GM12878 (cell line): ENCODE measurements at regions of chr1 and their contacts with region 1.

Region 1: GRCh38 chr1:205485338-205486228 is 18.9 kb upstream of the CDK18 start:
- DNase-seq: no peak
- ATAC-seq: peak; percentile 65
- H3K4me3 ChIP-seq: no peak overlapping the region
- H3K27ac ChIP-seq: no peak overlapping the region
- H3K4me1 ChIP-seq: peaks cover 14% of the 10 kb centered on the region
- H3K27me3 ChIP-seq: 0 out of 4 replicates have a peak, but pooled peaks cover 0 to 1% of the 10 kb centered on the region in 2 experiments
- CTCF ChIP-seq: peak; percentile 94 to 97 (median 96); a peak in 5 of 6 replicates
- EP300 ChIP-seq: no peak
- POLR2A ChIP-seq: no peak
- RAD21 ChIP-seq: peak; percentile 98

Region 2: DNA sequence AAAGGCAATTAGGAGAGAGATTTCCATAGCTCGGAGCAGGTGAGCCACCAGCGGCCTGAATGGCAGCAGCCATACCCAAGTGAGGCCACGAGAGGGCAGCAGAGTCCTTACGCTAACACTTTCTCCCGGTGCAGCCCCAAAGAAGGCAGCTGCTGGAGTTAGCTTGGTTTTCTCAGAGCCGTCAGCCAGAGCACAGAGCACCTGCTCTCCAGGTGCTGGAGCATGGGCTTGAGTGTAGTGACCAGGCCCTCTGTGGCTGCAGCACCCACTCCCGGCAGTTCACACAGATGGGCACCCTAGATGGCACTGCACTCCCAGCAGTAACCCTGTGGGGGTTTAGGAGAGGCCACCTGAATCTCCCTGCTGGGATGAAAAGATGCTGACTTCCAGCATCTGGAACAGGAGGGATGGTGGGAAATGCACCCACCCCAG is 212.0 kb before region 1 on chr1:
- CTCF ChIA-PET with region 1: interaction called, 96 read pairs
- POLR2A ChIA-PET with region 1: interaction called, 3 read pairs
- RAD21 ChIA-PET with region 1: interaction called, 53 read pairs
- SMC1A ChIA-PET with region 1: interaction called, 42 read pairs
- in situ Hi-C with region 1: loop called (anchors 5 kb)
- intact Hi-C with region 1: loop called (anchors 2 kb)
- DNase-seq: peak; percentile 32
- ATAC-seq: peak; percentile 90
- H3K4me3 ChIP-seq: no peak overlapping the region
- H3K27ac ChIP-seq: no peak overlapping the region
- H3K4me1 ChIP-seq: peaks cover 3% of the 10 kb centered on the region; the same call in 1 of the 2 replicates
- H3K27me3 ChIP-seq: peaks cover 0 to 2% of the 10 kb centered on the region in 2 experiments; a peak in 1 of 4 replicates
- CTCF ChIP-seq: peak; percentile 92 to 98 (median 98)
- EP300 ChIP-seq: peak in 1 of 2 experiments; percentile 38; a peak in 1 of 4 replicates
- POLR2A ChIP-seq: no peak
- RAD21 ChIP-seq: peak; percentile 96

Region 3: DNA sequence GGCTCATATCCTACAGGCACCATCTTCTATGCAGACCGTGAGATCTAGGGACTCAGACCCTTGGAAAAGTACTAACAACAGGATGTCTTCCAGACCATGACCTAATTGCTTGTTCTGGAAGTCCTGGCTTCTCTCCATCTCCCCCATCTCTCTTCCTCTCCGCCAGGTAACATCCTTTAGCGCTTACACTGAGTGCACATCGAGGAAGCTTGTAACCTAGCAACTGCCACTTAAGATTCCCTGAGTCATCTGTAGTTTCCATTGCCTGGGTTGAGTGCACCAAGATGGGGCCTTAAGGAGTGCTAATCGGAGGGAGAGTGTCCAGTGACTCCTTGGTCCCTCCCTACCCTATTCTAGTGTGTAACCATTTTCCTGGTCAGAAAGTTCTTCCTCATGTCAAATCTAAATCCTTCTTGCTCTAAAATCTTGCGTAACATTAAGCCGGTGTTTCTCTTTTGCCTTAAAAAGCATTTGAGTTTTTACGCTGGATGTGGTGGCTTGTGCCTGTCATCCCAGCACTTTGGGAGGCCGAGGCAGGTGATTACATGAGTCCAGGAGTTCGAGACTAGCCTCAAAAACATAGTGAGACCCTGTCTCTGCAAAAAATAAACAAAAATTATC is 138.5 kb before region 1 on chr1:
- CTCF ChIA-PET with region 1: interaction called, 11 read pairs
- POLR2A ChIA-PET with region 1: no interaction called
- RAD21 ChIA-PET with region 1: interaction called, 5 read pairs
- SMC1A ChIA-PET with region 1: interaction called, 11 read pairs
- in situ Hi-C with region 1: no loop called
- intact Hi-C with region 1: no loop called
- DNase-seq: no peak
- ATAC-seq: no peak
- H3K4me3 ChIP-seq: no peak overlapping the region
- H3K27ac ChIP-seq: no peak overlapping the region
- H3K4me1 ChIP-seq: no peaks in the 10 kb centered on the region
- H3K27me3 ChIP-seq: peaks cover 15 to 18% of the 10 kb centered on the region in 2 experiments
- CTCF ChIP-seq: no peak
- EP300 ChIP-seq: no peak
- POLR2A ChIP-seq: no peak
- RAD21 ChIP-seq: no peak

Region 4: DNA sequence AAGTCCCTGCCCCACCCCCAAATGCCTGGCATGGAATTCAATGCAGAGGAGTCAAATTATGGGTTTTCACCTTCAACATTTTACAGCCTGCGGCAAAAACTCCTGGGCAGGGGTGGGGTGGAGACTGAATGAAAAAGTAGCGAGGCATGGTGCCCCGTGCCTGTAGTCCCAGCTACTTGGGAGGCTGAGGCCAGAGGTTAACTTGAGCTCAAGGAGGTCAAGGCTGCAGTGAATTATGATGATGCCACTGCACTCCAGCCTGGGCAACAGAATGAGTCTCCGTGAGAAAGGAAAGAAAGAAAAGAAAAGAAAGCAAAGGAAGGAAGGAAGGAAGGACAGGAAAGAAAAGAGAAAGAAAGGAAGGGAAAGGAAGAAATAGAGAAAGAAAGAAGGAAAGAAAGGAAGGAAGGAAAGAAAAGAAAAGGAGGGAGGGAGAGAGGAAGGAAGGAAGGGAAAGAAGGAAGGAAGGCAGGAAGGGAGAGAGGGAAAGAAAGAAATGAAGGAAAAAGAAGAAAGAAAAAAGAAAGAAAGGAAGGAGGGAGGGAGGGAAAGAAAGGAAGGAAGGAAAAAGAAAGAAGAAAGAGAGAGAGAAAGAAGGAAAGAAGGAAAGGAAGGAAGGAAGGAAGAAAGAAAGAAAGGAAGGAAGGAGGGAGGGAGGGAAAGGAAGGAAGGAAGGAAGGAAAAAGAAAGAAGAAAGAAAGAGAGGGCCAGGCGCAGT is 74.8 kb before region 1 on chr1:
- CTCF ChIA-PET with region 1: interaction called, 16 read pairs
- POLR2A ChIA-PET with region 1: interaction called, 5 read pairs
- RAD21 ChIA-PET with region 1: interaction called, 6 read pairs
- SMC1A ChIA-PET with region 1: interaction called, 7 read pairs
- in situ Hi-C with region 1: no loop called
- intact Hi-C with region 1: no loop called
- DNase-seq: no peak
- ATAC-seq: no peak
- H3K4me3 ChIP-seq: no peak overlapping the region
- H3K27ac ChIP-seq: no peak overlapping the region
- H3K4me1 ChIP-seq: no peaks in the 10 kb centered on the region
- H3K27me3 ChIP-seq: peaks cover 0 to 5% of the 10 kb centered on the region in 2 experiments; a peak in 3 of 4 replicates
- CTCF ChIP-seq: no peak
- EP300 ChIP-seq: no peak
- POLR2A ChIP-seq: no peak
- RAD21 ChIP-seq: no peak

Region 5: GRCh38 chr1:205440476-205441317 is 44.9 kb before region 1 on chr1:
- CTCF ChIA-PET with region 1: interaction called, 191 read pairs
- POLR2A ChIA-PET with region 1: no interaction called
- RAD21 ChIA-PET with region 1: interaction called, 42 read pairs
- SMC1A ChIA-PET with region 1: interaction called, 35 read pairs
- in situ Hi-C with region 1: no loop called
- intact Hi-C with region 1: loop called (anchors 2 kb)
- DNase-seq: peak; percentile 47
- ATAC-seq: peak; percentile 92
- H3K4me3 ChIP-seq: peak overlapping the region; percentile 60; the same call in 1 of the 2 replicates
- H3K27ac ChIP-seq: peak overlapping the region; percentile 59
- H3K4me1 ChIP-seq: peaks cover 20% of the 10 kb centered on the region
- H3K27me3 ChIP-seq: no peaks in the 10 kb centered on the region; a peak in 1 of 4 replicates
- CTCF ChIP-seq: no peak
- EP300 ChIP-seq: no peak
- POLR2A ChIP-seq: peak; percentile 55; the same call in 1 of the 2 replicates
- RAD21 ChIP-seq: no peak

Region 6: DNA sequence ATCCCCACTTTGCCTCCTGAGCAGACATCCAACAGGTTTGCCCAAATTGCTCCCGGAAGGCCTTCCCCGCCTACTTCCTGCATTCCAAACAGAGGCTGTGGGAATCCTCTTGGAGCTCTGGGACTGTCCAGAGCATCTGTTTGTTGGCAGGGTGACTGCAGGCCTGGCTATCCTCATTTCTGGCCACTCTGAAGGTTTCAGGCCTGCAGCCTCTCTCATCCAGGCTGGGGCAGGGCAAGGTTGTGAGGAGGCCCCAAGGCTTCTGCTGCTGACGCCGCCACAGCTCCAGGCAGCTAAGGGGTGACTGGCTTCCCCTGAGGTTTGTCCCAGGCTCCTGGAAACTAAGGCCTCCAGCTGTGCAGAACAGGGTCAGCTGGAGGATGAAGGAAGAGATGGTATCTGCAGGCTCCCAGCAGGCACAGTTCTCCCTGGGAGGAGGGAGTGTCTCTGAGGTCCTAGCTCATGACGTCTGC is 30.2 kb after region 1 on chr1:
- CTCF ChIA-PET with region 1: interaction called, 891 read pairs
- POLR2A ChIA-PET with region 1: no interaction called
- RAD21 ChIA-PET with region 1: interaction called, 342 read pairs
- SMC1A ChIA-PET with region 1: interaction called, 319 read pairs
- in situ Hi-C with region 1: loop called (anchors 5 kb)
- intact Hi-C with region 1: no loop called
- DNase-seq: no peak
- ATAC-seq: no peak
- H3K4me3 ChIP-seq: no peak overlapping the region
- H3K27ac ChIP-seq: no peak overlapping the region
- H3K4me1 ChIP-seq: no peaks in the 10 kb centered on the region
- H3K27me3 ChIP-seq: no peaks in the 10 kb centered on the region; a peak in 2 of 4 replicates
- CTCF ChIP-seq: no peak
- EP300 ChIP-seq: no peak
- POLR2A ChIP-seq: no peak
- RAD21 ChIP-seq: no peak

Region 7: GRCh38 chr1:205563867-205564441 is 78.4 kb after region 1 on chr1:
- CTCF ChIA-PET with region 1: no interaction called
- POLR2A ChIA-PET with region 1: no interaction called
- RAD21 ChIA-PET with region 1: no interaction called
- SMC1A ChIA-PET with region 1: no interaction called
- in situ Hi-C with region 1: no loop called
- intact Hi-C with region 1: no loop called
- DNase-seq: no peak
- ATAC-seq: no peak
- H3K4me3 ChIP-seq: no peak overlapping the region
- H3K27ac ChIP-seq: no peak overlapping the region
- H3K4me1 ChIP-seq: no peaks in the 10 kb centered on the region
- H3K27me3 ChIP-seq: peaks cover 5 to 9% of the 10 kb centered on the region in 2 experiments
- CTCF ChIP-seq: no peak
- EP300 ChIP-seq: no peak
- POLR2A ChIP-seq: no peak
- RAD21 ChIP-seq: no peak

Region 8: GRCh38 chr1:205631727-205632373 is 146.3 kb after region 1 on chr1 and contains the start of gene ELK4:
- CTCF ChIA-PET with region 1: interaction called, 12 read pairs
- POLR2A ChIA-PET with region 1: no interaction called
- RAD21 ChIA-PET with region 1: interaction called, 10 read pairs
- SMC1A ChIA-PET with region 1: interaction called, 3 read pairs
- in situ Hi-C with region 1: no loop called
- intact Hi-C with region 1: no loop called
- DNase-seq: peak; percentile 87
- ATAC-seq: peak; percentile 73
- H3K4me3 ChIP-seq: peak within 1 kb of the TSS; percentile 93
- H3K27ac ChIP-seq: peak within 1 kb of the TSS; percentile 74
- H3K4me1 ChIP-seq: peaks cover 13% of the 10 kb centered on the region
- H3K27me3 ChIP-seq: no peaks in the 10 kb centered on the region
- CTCF ChIP-seq: peak; percentile 70 to 98 (median 86); a peak in 5 of 6 replicates
- EP300 ChIP-seq: no peak; a peak in 1 of 4 replicates
- POLR2A ChIP-seq: peak; percentile 93
- RAD21 ChIP-seq: peak; percentile 79
- polyA plus RNA-seq, gene ELK4: 5.2 to 11.9 TPM